ENCODE measurements at regions of chr1 and their contacts with region 1.

Region 1: DNA sequence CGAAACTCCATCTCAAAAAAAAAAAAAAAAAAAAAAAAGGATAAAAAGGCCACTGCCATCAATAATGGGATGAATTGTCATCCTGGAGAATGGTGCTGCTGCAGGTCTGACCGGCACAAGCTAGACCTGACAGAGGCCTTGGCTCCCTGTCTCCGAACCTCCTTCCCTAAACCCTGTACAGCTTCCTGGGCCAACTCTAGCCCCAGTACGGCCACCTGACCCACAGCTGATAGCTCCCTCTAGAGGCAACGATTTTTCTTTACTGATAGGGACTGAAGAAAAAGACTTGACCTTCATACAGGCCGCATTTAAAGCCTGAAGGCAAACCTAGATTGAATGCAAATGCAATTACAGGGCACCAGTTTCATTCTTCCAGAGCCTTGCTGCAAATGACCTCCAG is 30.7 kb downstream of the NOL9 start:
- DNase-seq: peak; percentile 65
- ATAC-seq: peak; percentile 81
- H3K4me3 ChIP-seq: no peak overlapping the region
- H3K27ac ChIP-seq: no peak overlapping the region
- H3K4me1 ChIP-seq: no peaks in the 10 kb centered on the region
- H3K27me3 ChIP-seq: no peaks in the 10 kb centered on the region
- CTCF ChIP-seq: peak; percentile 81
- EP300 ChIP-seq: no peak
- POLR2A ChIP-seq: no peak
- RAD21 ChIP-seq: no peak; the same call in 1 of the 2 replicates

Region 2: DNA sequence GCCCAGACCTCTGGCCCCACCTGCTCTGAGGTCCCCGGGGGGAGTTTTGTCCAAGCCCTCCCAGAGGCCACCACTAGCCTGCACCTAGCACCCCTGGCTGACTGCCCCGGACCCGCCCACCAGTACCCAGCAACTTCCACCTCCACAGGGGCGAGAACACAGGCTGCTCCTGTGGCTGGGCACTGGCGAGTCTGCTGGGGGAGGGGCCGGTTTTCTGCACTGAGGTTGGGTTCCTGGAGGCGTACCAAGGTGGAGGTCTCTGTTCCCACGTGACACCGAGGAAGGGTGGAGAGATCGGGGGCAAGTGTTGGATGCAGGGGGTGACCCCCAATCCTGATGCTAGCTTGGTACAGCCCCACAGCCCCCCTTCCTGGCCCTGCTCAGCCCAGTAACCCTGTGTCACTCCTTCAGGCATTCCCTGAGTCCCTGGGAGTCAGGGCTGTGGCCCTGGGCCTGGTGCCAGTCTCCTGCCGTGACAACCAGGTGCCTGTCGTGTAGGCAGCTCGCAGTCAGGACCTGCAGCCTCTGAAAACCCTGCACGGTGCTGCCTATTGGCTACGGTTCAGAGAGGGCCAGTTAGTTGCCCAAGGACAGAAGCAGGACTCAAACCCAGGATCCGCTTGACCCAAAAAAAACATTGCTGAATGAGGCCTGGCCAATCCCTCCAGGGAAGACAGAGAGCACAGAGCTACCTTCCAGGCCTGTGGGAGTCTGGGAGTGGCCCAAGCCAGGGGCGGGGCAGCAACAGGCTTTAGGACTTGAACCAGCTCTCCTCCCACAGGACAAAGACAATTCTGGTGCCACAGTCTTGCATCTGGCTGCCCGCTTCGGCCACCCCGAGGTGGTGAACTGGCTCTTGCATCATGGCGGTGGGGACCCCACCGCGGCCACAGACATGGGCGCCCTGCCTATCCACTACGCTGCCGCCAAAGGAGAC is 95.9 kb before region 1 on chr1:
- CTCF ChIA-PET with region 1: no interaction called
- POLR2A ChIA-PET with region 1: no interaction called
- in situ Hi-C with region 1: no loop called
- intact Hi-C with region 1: no loop called
- DNase-seq: no peak
- ATAC-seq: no peak
- H3K4me3 ChIP-seq: no peak overlapping the region
- H3K27ac ChIP-seq: no peak overlapping the region
- H3K4me1 ChIP-seq: peaks cover 44% of the 10 kb centered on the region
- H3K27me3 ChIP-seq: peaks cover 35 to 76% of the 10 kb centered on the region in 2 experiments
- CTCF ChIP-seq: no peak
- EP300 ChIP-seq: no peak
- POLR2A ChIP-seq: no peak
- RAD21 ChIP-seq: no peak

Region 3: DNA sequence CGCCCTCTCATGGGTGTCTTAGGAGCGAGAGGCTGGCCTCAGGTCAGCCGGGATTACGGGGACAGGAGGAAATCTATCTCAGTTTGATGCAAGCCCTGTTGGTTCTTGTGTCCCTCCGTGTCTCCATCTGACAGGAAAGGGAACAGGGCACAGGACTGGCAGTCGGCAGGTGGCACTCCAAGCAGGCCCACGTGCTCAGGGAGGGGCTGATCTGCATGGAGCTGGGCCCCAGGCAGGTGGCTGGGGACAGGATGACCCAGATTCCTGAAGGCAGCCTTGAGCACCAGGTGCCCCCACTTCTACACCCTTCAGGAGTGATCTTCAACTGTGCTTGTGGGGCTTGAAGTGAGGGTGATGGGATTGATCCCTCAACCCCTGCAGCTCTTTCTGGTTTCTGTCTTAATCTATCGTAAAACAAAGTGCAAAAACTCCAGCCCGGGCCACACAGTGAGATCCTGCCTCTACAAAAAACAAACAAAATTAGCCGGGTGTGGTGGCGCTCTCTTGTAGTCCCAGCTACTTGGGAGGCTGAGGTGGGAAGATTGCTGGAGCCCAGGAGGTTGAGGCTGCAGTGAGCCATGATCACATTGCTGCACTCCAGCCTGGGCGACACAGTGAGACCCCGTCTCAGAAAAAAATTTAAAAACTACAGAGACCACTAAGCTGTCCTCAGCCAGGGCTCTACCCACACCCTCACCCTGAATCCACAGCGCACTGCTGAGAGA is 40.4 kb before region 1 on chr1:
- CTCF ChIA-PET with region 1: interaction called, 24 read pairs
- POLR2A ChIA-PET with region 1: no interaction called
- in situ Hi-C with region 1: loop called (anchors 5 kb)
- intact Hi-C with region 1: loop called (anchors 1 kb)
- DNase-seq: no peak
- ATAC-seq: no peak
- H3K4me3 ChIP-seq: no peak overlapping the region
- H3K27ac ChIP-seq: no peak overlapping the region
- H3K4me1 ChIP-seq: peaks cover 23% of the 10 kb centered on the region
- H3K27me3 ChIP-seq: peaks cover 0 to 3% of the 10 kb centered on the region in 2 experiments; a peak in 1 of 5 replicates
- CTCF ChIP-seq: 0 out of 2 replicates have a peak, but pooled peaks have one; percentile 17
- EP300 ChIP-seq: no peak
- POLR2A ChIP-seq: no peak
- RAD21 ChIP-seq: no peak

Region 4: GRCh38 chr1:6513320-6513801 is 10.2 kb before region 1 on chr1:
- CTCF ChIA-PET with region 1: no interaction called
- POLR2A ChIA-PET with region 1: interaction called, 20 read pairs
- in situ Hi-C with region 1: no loop called
- intact Hi-C with region 1: no loop called
- DNase-seq: no peak
- ATAC-seq: peak; percentile 58
- H3K4me3 ChIP-seq: peak overlapping the region in 2 of 3 experiments; percentile 31 to 57; a peak in 4 of 6 replicates
- H3K27ac ChIP-seq: peak overlapping the region; percentile 40
- H3K4me1 ChIP-seq: peaks cover 59% of the 10 kb centered on the region
- H3K27me3 ChIP-seq: peaks cover 3 to 5% of the 10 kb centered on the region in 2 experiments; a peak in 3 of 5 replicates
- CTCF ChIP-seq: peak; percentile 51
- EP300 ChIP-seq: no peak
- POLR2A ChIP-seq: no peak
- RAD21 ChIP-seq: no peak

Region 5: DNA sequence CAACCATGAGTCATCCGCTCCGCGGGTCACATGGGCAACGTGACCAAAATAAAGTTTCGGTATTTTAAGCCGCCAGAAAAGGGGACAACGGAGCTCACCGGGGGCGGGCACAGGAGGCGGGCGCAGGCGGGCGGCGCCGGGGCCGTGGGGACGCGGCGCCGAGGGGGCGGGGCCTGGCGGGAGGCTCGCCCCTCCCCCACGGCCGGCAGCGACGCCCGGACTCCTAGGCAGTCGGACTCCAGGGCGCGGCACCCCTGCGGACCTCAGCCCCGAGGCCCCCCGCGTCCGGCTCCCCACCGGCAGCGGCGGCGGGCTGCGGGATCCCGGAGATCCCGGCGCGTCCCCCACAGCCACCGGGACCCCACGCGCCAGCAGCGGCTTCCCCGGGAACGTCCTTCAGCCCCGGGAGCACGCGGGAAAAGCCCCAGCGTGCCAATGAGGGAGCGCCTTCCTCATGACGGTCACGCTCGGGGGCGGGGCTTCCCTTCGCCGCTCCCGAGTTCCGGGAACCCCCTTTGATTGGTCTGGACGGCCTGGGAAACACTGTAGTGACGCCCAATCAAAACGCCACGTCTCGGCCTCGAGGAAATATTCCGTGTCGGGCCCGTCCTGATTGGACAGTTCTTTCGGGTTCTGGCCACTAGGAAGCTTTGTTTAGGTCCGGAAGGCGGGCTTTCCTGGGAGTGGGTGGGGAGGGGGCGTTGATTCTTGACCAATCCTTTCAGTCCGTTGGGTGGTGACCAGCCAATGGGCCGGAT is 261.2 kb after region 1 on chr1:
- CTCF ChIA-PET with region 1: no interaction called
- POLR2A ChIA-PET with region 1: no interaction called
- in situ Hi-C with region 1: no loop called
- intact Hi-C with region 1: no loop called
- DNase-seq: peak; percentile 100
- ATAC-seq: peak; percentile 91
- H3K4me3 ChIP-seq: peak overlapping the region; percentile 83 to 97 (median 83)
- H3K27ac ChIP-seq: peak overlapping the region; percentile 98
- H3K4me1 ChIP-seq: peaks cover 45% of the 10 kb centered on the region
- H3K27me3 ChIP-seq: no peaks in the 10 kb centered on the region
- CTCF ChIP-seq: no peak
- EP300 ChIP-seq: no peak
- POLR2A ChIP-seq: peak; percentile 67 to 73
- RAD21 ChIP-seq: peak; percentile 55

Measured in HepG2 (cell line).